Mammary epithelial cell (primary cell): ENCODE measurements at regions of chr2 and their contacts with region 1.

Region 1: DNA sequence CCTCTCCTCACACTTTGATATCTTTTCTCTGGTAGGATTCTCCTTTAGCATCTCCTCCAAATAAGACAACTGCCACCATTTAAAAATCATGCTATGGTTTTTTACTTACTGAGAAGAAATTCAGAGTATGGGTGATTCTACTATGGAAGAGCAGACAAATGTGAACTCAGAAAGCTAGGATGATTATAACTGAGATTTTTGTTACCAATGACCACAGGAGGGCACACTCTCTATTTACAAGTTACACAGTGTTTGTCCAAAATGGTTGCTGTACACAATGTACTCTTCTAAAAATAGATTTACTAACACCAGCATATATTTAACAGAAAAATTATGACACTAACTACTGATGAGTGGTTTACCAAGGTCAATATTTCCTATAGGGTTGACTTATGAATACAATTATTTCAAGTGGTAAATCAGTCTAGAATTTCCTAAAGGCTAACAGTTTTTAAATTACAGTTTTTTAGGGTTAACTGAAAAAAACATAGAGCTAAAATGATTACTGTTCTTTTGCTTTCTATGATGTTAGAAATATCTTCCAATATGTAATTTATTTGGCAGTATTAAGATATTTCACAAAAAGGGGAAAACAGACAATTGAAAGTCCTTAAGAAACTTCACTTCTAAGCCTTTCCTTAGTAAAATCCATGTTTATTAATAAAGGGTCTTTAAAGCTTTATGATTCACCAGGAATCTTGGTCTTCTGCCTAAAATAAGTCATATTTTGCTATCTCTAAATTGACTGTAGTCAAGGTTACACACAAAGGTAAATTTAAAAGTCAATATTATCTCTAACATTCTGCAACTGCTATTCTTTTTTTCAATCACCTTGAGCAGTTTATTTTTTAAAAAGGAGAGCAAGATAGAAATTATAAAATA is 57.2 kb downstream of the MAP4K3 start:
- DNase-seq: peak; percentile 36
- H3K4me3 ChIP-seq: no peak overlapping the region
- H3K27ac ChIP-seq: peak overlapping the region; percentile 59
- H3K4me1 ChIP-seq: no peaks in the 10 kb centered on the region
- H3K27me3 ChIP-seq: no peaks in the 10 kb centered on the region
- CTCF ChIP-seq: peak; percentile 49 to 61

Region 2: GRCh38 chr2:39188960-39189494 is 190.9 kb before region 1 on chr2:
- CTCF ChIA-PET with region 1: no interaction called
- dilution Hi-C with region 1: no loop called
- in situ Hi-C with region 1: no loop called
- intact Hi-C with region 1: no loop called
- DNase-seq: no peak
- H3K4me3 ChIP-seq: no peak overlapping the region
- H3K27ac ChIP-seq: no peak overlapping the region
- H3K4me1 ChIP-seq: no peaks in the 10 kb centered on the region
- H3K27me3 ChIP-seq: no peaks in the 10 kb centered on the region
- CTCF ChIP-seq: no peak

Region 3: GRCh38 chr2:39264733-39265132 is 115.2 kb before region 1 on chr2:
- CTCF ChIA-PET with region 1: no interaction called
- dilution Hi-C with region 1: no loop called
- in situ Hi-C with region 1: no loop called
- intact Hi-C with region 1: no loop called
- DNase-seq: no peak
- H3K4me3 ChIP-seq: no peak overlapping the region
- H3K27ac ChIP-seq: no peak overlapping the region
- H3K4me1 ChIP-seq: no peaks in the 10 kb centered on the region
- H3K27me3 ChIP-seq: no peaks in the 10 kb centered on the region
- CTCF ChIP-seq: no peak

Region 4: GRCh38 chr2:39368846-39369245 is 11.0 kb before region 1 on chr2:
- CTCF ChIA-PET with region 1: no interaction called
- dilution Hi-C with region 1: no loop called
- in situ Hi-C with region 1: no loop called
- intact Hi-C with region 1: no loop called
- DNase-seq: no peak
- H3K4me3 ChIP-seq: no peak overlapping the region
- H3K27ac ChIP-seq: no peak overlapping the region
- H3K4me1 ChIP-seq: no peaks in the 10 kb centered on the region
- H3K27me3 ChIP-seq: no peaks in the 10 kb centered on the region
- CTCF ChIP-seq: no peak

Region 5: GRCh38 chr2:39696838-39697237 is 317.0 kb after region 1 on chr2:
- CTCF ChIA-PET with region 1: no interaction called
- dilution Hi-C with region 1: no loop called
- in situ Hi-C with region 1: loop called in 1 of 2 experiments (anchors 25 kb)
- intact Hi-C with region 1: loop called (anchors 2 kb)
- DNase-seq: peak; percentile 53
- H3K4me3 ChIP-seq: no peak overlapping the region
- H3K27ac ChIP-seq: no peak overlapping the region
- H3K4me1 ChIP-seq: peaks cover 7% of the 10 kb centered on the region
- H3K27me3 ChIP-seq: no peaks in the 10 kb centered on the region
- CTCF ChIP-seq: peak; percentile 37 to 39

Region 6: GRCh38 chr2:39728941-39729351 is 349.1 kb after region 1 on chr2:
- CTCF ChIA-PET with region 1: interaction called, 4 read pairs
- dilution Hi-C with region 1: no loop called
- in situ Hi-C with region 1: loop called in 1 of 2 experiments (anchors 25 kb)
- intact Hi-C with region 1: loop called (anchors 1 kb)
- DNase-seq: no peak
- H3K4me3 ChIP-seq: no peak overlapping the region
- H3K27ac ChIP-seq: no peak overlapping the region
- H3K4me1 ChIP-seq: peaks cover 23% of the 10 kb centered on the region
- H3K27me3 ChIP-seq: no peaks in the 10 kb centered on the region
- CTCF ChIP-seq: peak; percentile 79 to 90